Spleen (tissue), 13 donors: ENCODE measurements at regions of chr1 and their contacts with region 1.

Region 1: DNA sequence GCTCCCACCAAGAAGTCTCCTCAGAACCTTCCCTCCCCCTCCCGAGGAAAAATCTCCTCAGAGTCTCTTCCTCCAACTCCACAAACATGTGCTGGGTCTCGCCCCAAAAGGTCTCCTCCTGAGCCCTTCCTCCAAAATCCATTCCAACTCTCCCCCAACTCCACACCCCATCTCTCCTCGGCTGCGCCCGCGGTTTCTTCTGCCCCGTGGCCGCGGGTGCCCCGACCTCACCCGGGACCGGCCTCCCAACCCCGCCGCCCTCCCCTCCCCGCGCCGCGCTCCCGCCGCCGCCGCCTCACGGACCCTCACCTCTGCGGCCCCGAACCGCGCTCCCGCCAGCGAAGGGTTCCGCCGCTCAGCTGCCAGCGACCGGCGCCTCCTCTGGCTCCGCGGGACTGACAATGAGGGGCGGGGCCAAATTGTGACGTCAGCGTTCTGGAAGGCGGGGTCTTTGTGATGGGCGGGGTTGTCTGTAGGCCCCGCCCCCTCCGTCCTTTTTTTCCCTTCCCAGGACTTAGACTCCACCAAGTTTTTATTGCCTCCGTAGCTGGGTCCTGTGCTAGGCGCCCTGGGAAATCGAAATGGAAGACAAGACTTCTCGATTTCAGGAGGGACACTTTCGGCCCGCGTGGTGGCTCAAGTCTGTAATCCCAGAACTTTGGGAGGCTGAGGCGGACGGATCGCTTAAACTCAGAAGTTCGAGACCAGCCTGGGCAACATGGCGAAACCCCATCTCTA is at the start of gene LUZP1:
- DNase-seq: peak; percentile 97
- H3K4me3 ChIP-seq: peak within 1 kb of the TSS; percentile 65 to 95 (median 82)
- H3K27ac ChIP-seq: peak within 1 kb of the TSS; percentile 78 to 96 (median 91)
- H3K4me1 ChIP-seq: peaks cover 17 to 71% (median 47%) of the 10 kb centered on the region in 6 donors
- H3K27me3 ChIP-seq: no peaks in the 10 kb centered on the region
- CTCF ChIP-seq: peak in 3 of 11 experiments; percentile 12 to 32 (median 26)
- POLR2A ChIP-seq: peak in 2 of 3 donors; percentile 70 to 83
- total RNA-seq, gene LUZP1: 25.4 to 51.6 (median 36.8) TPM

Region 2: DNA sequence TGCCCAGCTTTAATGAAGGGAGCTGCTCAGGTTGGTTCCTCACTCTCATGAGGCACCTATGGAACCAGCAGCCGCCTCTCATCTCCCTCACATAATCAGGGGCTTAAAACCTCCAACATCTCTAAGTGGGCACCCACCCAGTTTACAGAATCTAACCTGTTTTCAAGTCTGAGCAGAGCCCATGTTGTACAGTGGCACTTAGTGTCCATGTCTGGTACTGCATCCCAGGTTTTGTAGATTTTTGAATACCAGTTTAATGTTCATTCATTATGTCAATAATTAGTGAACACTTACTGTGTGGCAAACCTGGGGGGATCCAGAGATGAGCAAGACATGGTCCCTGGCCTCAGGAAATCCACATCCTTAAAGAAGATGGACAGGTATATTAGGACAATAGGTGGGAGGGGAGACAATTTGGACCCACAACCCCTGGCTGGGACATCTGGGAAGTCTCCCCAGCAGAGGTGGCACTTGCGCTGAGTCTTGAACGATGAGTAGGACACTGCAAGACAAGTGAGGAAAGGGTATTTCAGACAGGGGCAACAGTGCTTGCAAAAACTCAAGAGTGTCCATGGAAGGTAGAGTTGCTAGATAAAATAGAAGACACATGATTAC is 279.3 kb before region 1 on chr1:
- intact Hi-C with region 1: no loop called
- DNase-seq: no peak
- H3K4me3 ChIP-seq: no peak overlapping the region
- H3K27ac ChIP-seq: no peak overlapping the region
- H3K4me1 ChIP-seq: peaks cover 5 to 18% (median 7%) of the 10 kb centered on the region in 6 donors
- H3K27me3 ChIP-seq: no peaks in the 10 kb centered on the region
- CTCF ChIP-seq: peak; percentile 30 to 67 (median 53)
- POLR2A ChIP-seq: no peak

Region 3: DNA sequence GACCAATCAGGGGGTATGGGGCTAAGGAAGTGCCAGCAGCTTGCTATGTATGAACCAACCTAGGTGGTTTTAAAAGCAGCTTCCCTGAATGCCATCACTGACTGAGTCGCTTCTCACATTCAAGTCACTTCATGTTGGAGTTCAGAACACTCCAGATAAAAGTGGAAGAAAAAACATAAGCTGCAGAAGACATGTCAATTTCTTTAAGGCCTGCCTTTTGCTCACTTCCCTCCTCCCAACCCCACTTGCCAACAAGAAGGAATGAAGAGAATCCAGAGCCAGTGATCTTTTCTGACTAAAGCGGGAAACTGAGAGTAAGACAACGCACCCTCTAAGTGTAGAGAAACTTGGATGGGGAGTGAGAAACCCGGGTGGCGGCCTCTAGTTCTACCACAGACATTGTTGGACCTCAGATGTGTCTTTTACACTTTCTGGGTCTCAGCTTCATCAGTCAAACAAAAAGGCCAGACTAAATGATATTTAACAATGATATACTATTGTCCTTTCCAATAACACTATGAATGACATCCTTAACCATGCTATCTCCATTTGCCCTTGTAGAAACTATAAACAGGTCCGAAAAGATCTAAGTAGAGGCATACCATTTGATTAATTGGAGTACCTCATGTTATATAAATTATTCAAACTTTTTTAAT is 54.1 kb before region 1 on chr1:
- intact Hi-C with region 1: loop called (anchors 5 kb)
- DNase-seq: no peak
- H3K4me3 ChIP-seq: no peak overlapping the region
- H3K27ac ChIP-seq: peak overlapping the region in 6 of 8 donors; percentile 7 to 53 (median 34)
- H3K4me1 ChIP-seq: peaks cover 28 to 99% (median 71%) of the 10 kb centered on the region in 6 donors
- H3K27me3 ChIP-seq: no peaks in the 10 kb centered on the region
- CTCF ChIP-seq: no peak
- POLR2A ChIP-seq: no peak